Gastrocnemius medialis (tissue), 4 donors: ENCODE measurements at regions of chr12 and their contacts with region 1.

Region 1: DNA sequence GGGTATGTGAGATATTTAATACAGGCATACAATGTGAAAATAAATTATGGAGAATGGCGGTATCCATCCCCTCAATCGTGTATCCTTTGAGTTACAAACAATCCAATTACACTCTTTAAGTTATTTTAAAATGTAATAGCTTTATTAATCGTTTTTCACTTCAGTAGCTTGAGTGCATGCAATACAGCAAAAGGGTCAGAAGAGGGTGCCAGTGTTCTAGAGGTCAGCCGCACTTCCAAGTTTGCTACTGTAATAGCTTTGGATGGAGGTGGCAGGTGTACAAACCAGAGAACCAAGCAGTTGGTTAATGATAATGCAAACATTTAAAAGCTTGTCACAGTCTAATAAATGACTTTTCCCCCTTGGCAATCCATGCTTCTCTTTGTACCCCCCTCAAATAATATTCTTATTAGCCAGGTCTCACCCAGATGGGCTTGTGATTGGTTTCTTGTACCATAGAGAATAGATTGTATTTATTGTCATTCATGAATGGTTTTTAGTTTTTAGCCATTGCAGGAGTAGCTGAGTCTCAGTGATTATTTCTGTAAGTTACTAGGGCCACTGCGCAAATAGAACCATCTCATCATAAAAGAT is 127.0 kb downstream of the ERC1 start:
- DNase-seq: peak; percentile 18 to 51
- ATAC-seq: peak in 1 of 2 donors; percentile 64
- H3K4me3 ChIP-seq: no peak overlapping the region
- H3K27ac ChIP-seq: no peak overlapping the region
- H3K4me1 ChIP-seq: peaks cover 0 to 4% of the 10 kb centered on the region in 2 donors
- H3K27me3 ChIP-seq: no peaks in the 10 kb centered on the region
- CTCF ChIP-seq: peak; percentile 83 to 96 (median 88)
- POLR2A ChIP-seq: no peak

Region 2: DNA sequence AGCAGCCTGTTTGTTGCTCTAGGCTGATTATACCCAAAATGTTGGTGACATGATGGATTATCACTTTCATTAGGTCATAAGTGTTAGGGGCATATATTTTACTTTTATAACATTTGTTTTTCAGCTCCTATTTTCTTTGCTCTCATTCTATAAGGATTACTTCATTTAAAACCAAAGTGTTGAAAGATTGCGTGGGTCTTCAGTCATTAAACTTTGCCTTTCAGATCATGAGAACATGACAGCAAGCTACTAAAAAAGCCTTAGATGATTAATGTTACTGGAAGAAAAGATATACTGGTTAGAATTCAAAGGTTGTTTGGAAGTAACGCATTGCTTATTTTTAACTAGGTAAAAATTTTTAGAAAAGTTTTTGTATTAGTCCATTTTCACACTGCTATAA is 29.8 kb after region 1 on chr12:
- in situ Hi-C with region 1: no loop called
- intact Hi-C with region 1: no loop called
- DNase-seq: no peak
- ATAC-seq: no peak
- H3K4me3 ChIP-seq: no peak overlapping the region
- H3K27ac ChIP-seq: no peak overlapping the region
- H3K4me1 ChIP-seq: no peaks in the 10 kb centered on the region
- H3K27me3 ChIP-seq: no peaks in the 10 kb centered on the region
- CTCF ChIP-seq: no peak
- POLR2A ChIP-seq: no peak

Region 3: GRCh38 chr12:1576410-1577241 is 458.6 kb after region 1 on chr12:
- in situ Hi-C with region 1: loop called in 1 of 4 experiments (anchors 5 kb)
- intact Hi-C with region 1: no loop called
- DNase-seq: no peak
- ATAC-seq: no peak
- H3K4me3 ChIP-seq: no peak overlapping the region
- H3K27ac ChIP-seq: no peak overlapping the region
- H3K4me1 ChIP-seq: peaks cover 3 to 4% of the 10 kb centered on the region in 2 donors
- H3K27me3 ChIP-seq: no peaks in the 10 kb centered on the region
- CTCF ChIP-seq: no peak
- POLR2A ChIP-seq: no peak

Region 4: GRCh38 chr12:1583421-1584078 is 465.5 kb after region 1 on chr12:
- in situ Hi-C with region 1: loop called (anchors 5 kb)
- intact Hi-C with region 1: loop called (anchors 1 kb)
- DNase-seq: peak; percentile 38 to 53
- ATAC-seq: peak; percentile 71 to 82
- H3K4me3 ChIP-seq: peak overlapping the region in 2 of 4 donors; percentile 27 to 50
- H3K27ac ChIP-seq: no peak overlapping the region
- H3K4me1 ChIP-seq: peaks cover 8 to 20% of the 10 kb centered on the region in 2 donors
- H3K27me3 ChIP-seq: no peaks in the 10 kb centered on the region
- CTCF ChIP-seq: peak; percentile 72 to 85 (median 83)
- POLR2A ChIP-seq: no peak